AG04449 (cell line): ENCODE measurements at regions of chr3 and their contacts with region 1.

Region 1: GRCh38 chr3:114362815-114363214 is 69.0 kb downstream of the TIGIT start:
- DNase-seq: no peak
- H3K4me3 ChIP-seq: no peak overlapping the region
- CTCF ChIP-seq: peak; percentile 30

Region 2: GRCh38 chr3:114351123-114351821 is 11.5 kb before region 1 on chr3:
- CTCF ChIA-PET with region 1: interaction called, 12 read pairs
- POLR2A ChIA-PET with region 1: no interaction called
- DNase-seq: no peak
- H3K4me3 ChIP-seq: no peak overlapping the region
- CTCF ChIP-seq: no peak

Region 3: GRCh38 chr3:114375608-114376421 is 13.0 kb after region 1 on chr3:
- CTCF ChIA-PET with region 1: interaction called, 52 read pairs
- POLR2A ChIA-PET with region 1: no interaction called
- DNase-seq: no peak
- H3K4me3 ChIP-seq: no peak overlapping the region
- CTCF ChIP-seq: no peak

Region 4: DNA sequence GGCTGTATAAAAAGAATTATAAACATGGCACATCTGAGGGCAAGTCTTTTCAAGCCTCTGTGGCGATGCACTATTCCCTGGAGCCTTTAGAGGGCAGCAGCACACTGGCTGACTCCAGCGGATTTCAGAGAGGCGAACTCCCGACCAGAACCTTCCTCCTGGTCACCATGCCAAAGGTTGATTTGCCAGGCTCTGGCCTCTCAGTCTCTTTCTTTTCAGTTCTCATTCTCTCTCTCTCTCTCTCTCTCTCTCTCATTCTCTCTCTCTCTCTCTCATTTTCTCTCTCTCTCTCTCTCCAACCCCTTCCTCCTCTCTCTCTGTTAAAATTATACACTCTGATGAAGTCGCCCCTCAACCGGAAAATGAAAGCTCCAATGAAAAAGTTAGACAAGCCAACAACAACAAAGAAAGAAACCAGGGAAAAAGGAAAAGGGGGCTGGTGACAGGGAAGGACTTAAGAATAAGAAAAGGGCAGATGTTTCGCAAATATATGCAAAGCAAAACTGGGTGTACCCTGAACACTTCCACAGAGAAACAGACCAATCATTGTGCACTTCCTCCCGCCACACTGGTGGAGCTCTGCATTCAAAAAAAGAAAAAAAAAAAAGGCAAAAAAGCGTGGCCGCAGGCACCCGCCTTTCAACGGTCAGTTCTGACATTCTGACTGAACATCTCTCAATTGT is 21.2 kb after region 1 on chr3:
- CTCF ChIA-PET with region 1: interaction called, 52 read pairs
- POLR2A ChIA-PET with region 1: no interaction called
- DNase-seq: peak; percentile 38
- H3K4me3 ChIP-seq: peak overlapping the region; percentile 48
- CTCF ChIP-seq: peak; percentile 90

Region 5: GRCh38 chr3:114418724-114419543 is 56.1 kb after region 1 on chr3:
- CTCF ChIA-PET with region 1: interaction called, 24 read pairs
- POLR2A ChIA-PET with region 1: no interaction called
- DNase-seq: peak; percentile 78
- H3K4me3 ChIP-seq: no peak overlapping the region
- CTCF ChIP-seq: peak; percentile 61

Region 6: DNA sequence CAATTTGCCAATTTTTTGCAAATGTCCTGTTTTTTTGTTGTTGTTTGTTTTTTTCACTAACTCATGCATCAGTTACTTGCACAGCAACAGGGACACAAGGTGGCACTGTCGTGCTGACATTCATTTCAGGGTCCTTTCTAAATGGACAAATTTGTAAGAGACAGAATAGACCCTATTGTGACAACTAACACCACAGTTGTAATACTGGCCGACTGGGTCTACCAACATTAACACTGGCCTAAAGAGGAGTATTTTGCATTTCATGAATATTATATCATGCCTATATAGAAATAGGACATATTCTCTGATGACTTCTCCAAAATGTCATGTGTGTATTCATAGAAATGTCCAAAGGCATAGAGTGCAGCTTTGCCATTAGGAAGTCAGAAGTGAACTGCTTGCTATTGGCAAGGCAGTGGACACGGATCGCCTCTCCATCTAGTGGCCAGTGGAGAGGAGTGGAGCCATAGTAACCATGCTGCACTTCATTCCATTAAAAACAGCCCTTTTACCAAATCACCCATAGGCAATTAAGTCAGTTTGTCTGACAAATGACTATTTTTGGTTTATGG is 729.5 kb after region 1 on chr3:
- CTCF ChIA-PET with region 1: interaction called, 29 read pairs
- POLR2A ChIA-PET with region 1: no interaction called
- DNase-seq: no peak
- H3K4me3 ChIP-seq: no peak overlapping the region
- CTCF ChIP-seq: peak; percentile 87

Region 7: DNA sequence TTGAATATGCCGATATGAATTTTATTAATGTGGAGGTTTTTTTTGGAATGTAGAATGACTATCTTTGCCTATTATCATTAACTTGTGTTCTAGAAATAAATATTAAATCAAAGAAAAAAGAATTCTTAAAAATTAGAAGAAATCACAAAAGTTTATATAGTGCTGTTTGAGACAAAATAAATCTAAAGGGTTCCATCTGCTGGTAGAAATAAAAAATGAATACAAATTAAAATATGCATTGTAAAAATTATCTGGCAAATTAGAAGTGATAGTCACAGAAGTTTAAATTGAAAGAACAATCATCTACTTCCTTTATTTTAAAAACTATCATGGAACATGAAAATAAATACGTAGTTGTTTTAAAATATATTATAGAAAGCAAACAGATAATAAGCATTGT is 807.0 kb after region 1 on chr3:
- CTCF ChIA-PET with region 1: interaction called, 18 read pairs
- POLR2A ChIA-PET with region 1: no interaction called
- DNase-seq: no peak
- H3K4me3 ChIP-seq: no peak overlapping the region
- CTCF ChIP-seq: no peak